B cell (primary cell): ENCODE measurements at regions of chr6 and their contacts with region 1.

Region 1: DNA sequence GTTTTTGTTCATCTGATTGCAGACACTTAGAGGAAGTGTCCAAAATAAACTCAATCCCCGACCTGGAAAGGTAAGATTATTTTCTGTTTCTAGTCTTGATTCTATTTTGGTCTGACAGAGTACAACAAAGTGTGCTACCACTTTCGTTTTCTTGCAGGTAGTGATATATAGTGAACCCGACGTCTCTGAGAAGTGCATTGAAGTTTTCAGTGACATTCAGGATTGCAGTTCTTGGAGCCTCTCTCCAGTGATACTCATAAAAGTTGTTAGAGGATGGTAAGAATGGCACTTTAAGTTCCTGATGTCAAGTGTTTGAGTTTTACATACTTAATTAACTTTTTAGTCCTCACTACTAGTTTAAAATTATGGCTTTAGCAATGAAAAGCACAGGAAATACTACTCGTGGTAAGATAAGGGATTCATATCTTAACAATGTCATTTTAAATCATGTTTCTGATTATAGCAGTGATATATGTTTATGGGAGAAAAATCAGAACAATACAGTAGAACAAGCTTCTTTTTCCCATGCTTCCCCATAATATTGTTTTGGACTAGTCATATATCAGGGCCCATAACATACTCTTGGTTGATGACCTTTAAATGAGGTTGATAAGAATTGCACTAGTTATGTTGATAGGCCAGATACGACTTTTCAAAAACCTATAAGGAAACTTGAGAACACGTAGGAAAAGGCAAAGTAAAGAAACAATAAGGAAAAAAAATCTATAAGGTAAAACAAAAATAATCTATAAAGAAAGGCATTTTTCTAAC is 104.0 kb downstream of the RTN4IP1 start:
- DNase-seq: peak; percentile 74
- ATAC-seq: peak; percentile 29
- H3K4me3 ChIP-seq: peak overlapping the region; percentile 11 to 83 (median 45)
- H3K4me3 Mint-ChIP-seq: peak overlapping the region; percentile 83
- H3K27ac ChIP-seq: peak overlapping the region; percentile 75 to 81
- H3K27ac Mint-ChIP-seq: peak overlapping the region; percentile 85
- H3K4me1 ChIP-seq: peaks cover 51 to 70% of the 10 kb centered on the region in 2 donors
- H3K4me1 Mint-ChIP-seq: peaks cover 74% of the 10 kb centered on the region
- H3K27me3 ChIP-seq: no peaks in the 10 kb centered on the region
- H3K27me3 Mint-ChIP-seq: no peaks in the 10 kb centered on the region
- CTCF ChIP-seq: no peak

Region 2: DNA sequence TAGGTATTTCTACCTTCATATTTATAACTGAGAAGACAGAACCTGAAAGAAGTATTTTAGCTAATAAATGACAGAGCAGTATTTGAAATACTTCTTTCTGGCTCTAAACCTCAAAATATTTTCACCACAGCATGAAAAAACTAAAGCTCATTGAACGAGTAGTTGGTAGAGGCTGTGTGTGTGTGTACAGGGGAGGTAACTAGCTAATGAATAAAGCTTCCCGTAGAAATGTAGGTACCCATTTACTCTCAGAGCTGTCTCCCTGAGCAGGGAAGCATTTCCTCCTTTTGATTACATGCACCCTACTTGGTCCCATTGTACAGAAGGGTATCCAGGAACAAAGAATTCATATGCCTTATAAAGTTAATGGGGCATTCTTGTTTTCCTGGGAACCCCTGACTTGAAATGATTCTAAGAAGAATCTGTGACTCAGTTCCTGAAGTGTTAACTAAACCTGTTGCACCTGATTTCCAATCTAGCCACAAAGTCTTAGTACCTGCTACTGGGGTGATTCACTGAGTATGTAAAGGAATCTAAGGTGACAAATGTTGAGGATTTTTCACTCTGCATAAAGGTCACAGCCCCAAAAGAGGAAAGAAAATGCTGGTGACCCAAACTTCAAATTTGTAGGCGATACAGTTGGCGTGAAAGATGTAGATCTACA is 152.3 kb before region 1 on chr6:
- CTCF ChIA-PET with region 1: no interaction called
- POLR2A ChIA-PET with region 1: no interaction called
- intact Hi-C with region 1: no loop called
- DNase-seq: no peak
- ATAC-seq: no peak
- H3K4me3 ChIP-seq: no peak overlapping the region
- H3K4me3 Mint-ChIP-seq: no peak overlapping the region
- H3K27ac ChIP-seq: no peak overlapping the region
- H3K27ac Mint-ChIP-seq: no peak overlapping the region
- H3K4me1 ChIP-seq: no peaks in the 10 kb centered on the region
- H3K4me1 Mint-ChIP-seq: no peaks in the 10 kb centered on the region
- H3K27me3 ChIP-seq: no peaks in the 10 kb centered on the region
- H3K27me3 Mint-ChIP-seq: peaks cover 3% of the 10 kb centered on the region
- CTCF ChIP-seq: no peak

Region 3: GRCh38 chr6:106546691-106547414 is 21.6 kb after region 1 on chr6:
- CTCF ChIA-PET with region 1: interaction called, 20 read pairs
- POLR2A ChIA-PET with region 1: interaction called, 6 read pairs
- intact Hi-C with region 1: loop called (anchors 1 kb)
- DNase-seq: peak; percentile 86
- ATAC-seq: peak; percentile 80
- H3K4me3 ChIP-seq: peak overlapping the region in 1 of 5 experiments; percentile 42
- H3K4me3 Mint-ChIP-seq: peak overlapping the region; percentile 80
- H3K27ac ChIP-seq: peak overlapping the region; percentile 88 to 93
- H3K27ac Mint-ChIP-seq: peak overlapping the region; percentile 99
- H3K4me1 ChIP-seq: peaks cover 31 to 35% of the 10 kb centered on the region in 2 donors
- H3K4me1 Mint-ChIP-seq: peaks cover 48% of the 10 kb centered on the region
- H3K27me3 ChIP-seq: no peaks in the 10 kb centered on the region
- H3K27me3 Mint-ChIP-seq: no peaks in the 10 kb centered on the region
- CTCF ChIP-seq: no peak

Region 4: GRCh38 chr6:106561686-106562405 is 36.5 kb after region 1 on chr6:
- CTCF ChIA-PET with region 1: interaction called, 14 read pairs
- POLR2A ChIA-PET with region 1: interaction called, 4 read pairs
- intact Hi-C with region 1: no loop called
- DNase-seq: no peak
- ATAC-seq: no peak
- H3K4me3 ChIP-seq: no peak overlapping the region
- H3K4me3 Mint-ChIP-seq: no peak overlapping the region
- H3K27ac ChIP-seq: peak overlapping the region in 1 of 2 donors; percentile 29
- H3K27ac Mint-ChIP-seq: peak overlapping the region; percentile 28
- H3K4me1 ChIP-seq: no peaks in the 10 kb centered on the region
- H3K4me1 Mint-ChIP-seq: peaks cover 11% of the 10 kb centered on the region
- H3K27me3 ChIP-seq: no peaks in the 10 kb centered on the region
- H3K27me3 Mint-ChIP-seq: no peaks in the 10 kb centered on the region
- CTCF ChIP-seq: no peak